Thyroid gland (tissue), 4 donors: ENCODE measurements at regions of chrX and their contacts with region 1.

Region 1: DNA sequence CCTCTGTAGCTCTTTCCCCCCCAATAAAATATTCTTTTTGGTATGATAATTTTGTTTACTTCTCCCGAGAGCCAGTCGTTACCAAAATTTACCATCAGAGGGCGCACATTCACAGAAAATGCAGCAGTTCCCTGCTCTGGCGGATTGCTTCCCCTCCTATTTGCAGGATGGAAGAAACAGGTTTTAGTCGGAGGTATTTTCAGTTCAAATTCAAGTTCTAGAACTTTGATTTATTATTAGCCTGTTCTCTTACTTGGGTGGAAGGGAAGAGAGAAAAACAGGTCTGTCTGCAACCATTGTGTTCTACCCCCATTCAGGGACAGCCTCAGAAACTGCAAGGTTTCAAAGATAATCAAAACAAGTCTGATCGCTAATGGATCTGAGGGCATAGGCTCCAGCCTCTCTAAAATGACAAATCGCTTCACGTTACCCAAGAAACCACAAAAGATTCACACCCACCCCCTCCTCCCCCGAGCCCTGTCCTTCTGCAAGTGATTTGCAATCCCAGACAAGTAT is 263.8 kb upstream of the RPS6KA3 start:
- DNase-seq: peak; percentile 47 to 57
- H3K4me3 ChIP-seq: no peak overlapping the region
- H3K27ac ChIP-seq: no peak overlapping the region
- H3K4me1 ChIP-seq: no peaks in the 10 kb centered on the region
- H3K27me3 ChIP-seq: no peaks in the 10 kb centered on the region
- CTCF ChIP-seq: peak in 5 of 6 experiments; percentile 40 to 64 (median 63)
- POLR2A ChIP-seq: no peak

Region 2: DNA sequence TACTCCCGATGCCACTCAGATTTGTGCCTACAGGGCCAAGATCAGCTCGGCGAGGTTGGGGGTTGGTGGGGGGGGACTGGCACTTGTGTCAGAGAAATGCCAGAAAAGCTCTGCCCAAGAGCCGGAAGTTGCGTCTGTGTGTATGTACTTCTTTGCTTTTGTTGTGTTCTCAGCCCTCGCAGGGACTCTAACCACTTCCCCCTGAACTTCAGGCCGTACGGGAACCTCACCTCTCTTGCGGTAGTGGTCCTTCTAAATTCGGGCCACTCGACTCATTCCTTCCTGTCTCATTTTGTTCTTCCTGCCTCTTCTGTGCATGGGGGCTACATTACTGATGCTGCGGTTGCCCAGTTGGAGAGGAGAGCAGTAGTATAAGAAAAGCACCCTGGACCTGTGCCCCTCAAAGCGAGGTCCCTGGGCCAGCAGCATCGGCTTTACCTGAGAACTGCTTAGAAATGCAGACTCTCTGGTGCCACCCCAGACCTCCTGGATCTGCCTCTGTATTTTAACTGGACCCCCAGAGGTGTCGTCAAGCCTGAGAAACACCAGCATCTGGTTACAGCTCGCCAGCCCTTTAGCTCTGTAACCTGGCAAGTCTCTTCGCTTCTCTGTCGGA is 117.5 kb before region 1 on chrX:
- intact Hi-C with region 1: no loop called
- DNase-seq: peak in 1 of 2 donors; percentile 1
- H3K4me3 ChIP-seq: no peak overlapping the region
- H3K27ac ChIP-seq: no peak overlapping the region
- H3K4me1 ChIP-seq: no peaks in the 10 kb centered on the region
- H3K27me3 ChIP-seq: no peaks in the 10 kb centered on the region
- CTCF ChIP-seq: no peak
- POLR2A ChIP-seq: no peak

Region 3: GRCh38 chrX:21479695-21480270 is 949.3 kb after region 1 on chrX:
- intact Hi-C with region 1: loop called (anchors 10 kb)
- DNase-seq: peak in 1 of 2 donors; percentile 1
- H3K4me3 ChIP-seq: no peak overlapping the region
- H3K27ac ChIP-seq: no peak overlapping the region
- H3K4me1 ChIP-seq: no peaks in the 10 kb centered on the region
- H3K27me3 ChIP-seq: no peaks in the 10 kb centered on the region
- CTCF ChIP-seq: peak in 4 of 6 experiments; percentile 27 to 59 (median 50)
- POLR2A ChIP-seq: no peak